ENCODE measurements at regions of chr17 and their contacts with region 1.

Region 1: DNA sequence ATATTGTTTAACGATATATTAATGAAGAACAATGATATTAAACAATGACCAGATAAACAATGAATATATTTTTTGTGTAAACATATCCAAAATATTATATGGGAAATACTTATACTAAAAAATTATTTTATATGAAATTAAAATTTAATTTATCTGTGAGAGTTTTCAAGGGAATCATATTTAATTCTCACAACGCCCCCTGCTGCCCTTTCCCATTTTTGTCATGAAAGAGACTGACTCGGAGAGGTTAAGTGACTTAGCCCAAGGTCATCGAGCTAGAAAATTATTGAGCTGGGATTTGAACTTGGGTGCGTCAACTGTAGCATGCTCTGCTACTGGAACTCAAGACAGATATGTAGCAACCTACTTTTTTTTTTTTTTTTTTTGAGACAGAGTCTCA is 7.2 kb upstream of the MYCBPAP start:
- DNase-seq: no peak
- H3K4me3 ChIP-seq: no peak overlapping the region
- H3K27me3 ChIP-seq: no peaks in the 10 kb centered on the region
- CTCF ChIP-seq: peak; percentile 49

Region 2: DNA sequence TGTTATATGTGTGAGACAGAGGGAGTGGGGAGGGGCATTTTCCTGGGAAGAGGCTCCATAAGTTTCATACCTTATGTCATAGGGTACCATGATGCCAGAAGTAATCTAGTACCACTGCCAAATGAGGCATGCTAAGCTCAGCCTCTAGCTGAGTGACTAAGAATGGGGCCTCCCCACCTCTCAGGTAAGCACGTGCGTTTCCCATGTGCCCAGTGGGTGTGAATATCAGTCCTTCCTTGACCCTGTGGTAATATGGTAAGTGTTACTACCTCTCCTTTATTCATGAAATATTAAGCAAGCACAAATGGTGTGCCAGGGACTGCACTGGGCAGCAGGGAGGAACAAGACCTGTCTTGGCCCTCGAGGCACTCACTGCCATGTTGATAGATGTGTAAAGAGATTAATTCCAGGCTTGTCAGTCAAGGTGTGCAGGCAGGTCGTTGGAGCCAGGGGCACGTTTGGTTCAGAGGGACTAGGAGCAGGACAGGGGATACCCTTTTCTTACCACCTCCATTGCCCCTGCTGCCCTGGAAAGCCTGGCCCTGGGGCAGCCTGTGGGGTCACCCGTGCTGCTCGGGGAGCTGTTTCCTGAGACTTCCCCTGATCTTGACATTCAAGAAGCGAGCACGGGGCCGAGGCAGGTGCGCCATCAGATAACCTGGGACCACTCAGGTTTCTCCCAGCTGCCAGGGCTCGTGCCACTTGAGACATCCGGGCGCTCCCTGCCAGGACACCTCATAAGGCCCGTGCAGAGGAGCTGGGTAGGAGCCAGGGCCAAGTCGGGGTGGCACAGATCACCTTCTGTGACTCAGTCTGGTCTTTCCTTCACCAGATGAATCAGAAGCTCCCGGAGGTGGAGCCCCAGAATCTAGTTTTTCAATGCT is 13.6 kb before region 1 on chr17:
- CTCF ChIA-PET with region 1: interaction called, 22 read pairs
- POLR2A ChIA-PET with region 1: no interaction called
- DNase-seq: no peak
- H3K4me3 ChIP-seq: no peak overlapping the region
- H3K27me3 ChIP-seq: no peaks in the 10 kb centered on the region
- CTCF ChIP-seq: no peak

Region 3: DNA sequence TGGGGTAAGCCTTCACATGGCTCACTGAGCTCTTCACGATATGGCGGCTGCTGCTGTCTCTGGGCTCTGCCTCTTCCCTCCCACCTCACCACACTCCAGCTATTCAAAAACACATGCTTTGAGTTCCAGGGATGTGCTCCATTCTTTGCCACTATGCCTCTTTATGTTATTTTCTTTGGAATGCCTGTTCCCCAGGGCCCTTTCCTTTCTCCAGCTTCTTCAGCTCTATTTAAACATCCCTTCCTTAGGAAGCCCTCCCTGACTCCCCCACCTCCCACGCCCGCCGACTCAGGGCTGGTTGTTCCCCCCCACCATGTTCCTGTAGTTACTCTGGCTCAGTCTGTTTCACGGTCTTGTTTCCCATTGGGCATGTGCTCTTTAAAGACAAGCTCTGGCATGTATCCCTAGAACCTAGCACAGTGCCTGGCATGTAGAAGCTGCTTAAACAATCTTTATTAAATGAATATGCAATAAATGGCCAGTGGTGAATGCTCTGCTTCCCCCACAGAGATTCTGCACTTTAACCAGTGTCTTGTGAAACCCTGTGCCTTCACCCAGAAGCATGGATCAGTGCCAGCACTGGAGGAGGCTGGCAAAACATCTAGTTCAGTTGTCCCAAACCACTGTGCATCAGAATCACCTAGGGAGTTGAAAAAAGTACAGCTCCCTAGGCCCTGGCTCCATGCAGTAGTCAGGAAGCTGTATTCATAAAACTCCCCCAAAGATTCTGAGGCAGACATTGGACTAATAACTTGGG is 14.1 kb after region 1 on chr17:
- CTCF ChIA-PET with region 1: interaction called, 14 read pairs
- POLR2A ChIA-PET with region 1: no interaction called
- DNase-seq: no peak
- H3K4me3 ChIP-seq: no peak overlapping the region
- H3K27me3 ChIP-seq: peaks cover 2% of the 10 kb centered on the region; the same call in 1 of the 2 replicates
- CTCF ChIP-seq: no peak

Measured in BJ (cell line).